ENCODE measurements at regions of chr1 and their contacts with region 1.

Region 1: GRCh38 chr1:181479137-181479745 is 4.1 kb upstream of the CACNA1E start:
- DNase-seq: peak; percentile 69
- ATAC-seq: peak; percentile 90

Region 2: DNA sequence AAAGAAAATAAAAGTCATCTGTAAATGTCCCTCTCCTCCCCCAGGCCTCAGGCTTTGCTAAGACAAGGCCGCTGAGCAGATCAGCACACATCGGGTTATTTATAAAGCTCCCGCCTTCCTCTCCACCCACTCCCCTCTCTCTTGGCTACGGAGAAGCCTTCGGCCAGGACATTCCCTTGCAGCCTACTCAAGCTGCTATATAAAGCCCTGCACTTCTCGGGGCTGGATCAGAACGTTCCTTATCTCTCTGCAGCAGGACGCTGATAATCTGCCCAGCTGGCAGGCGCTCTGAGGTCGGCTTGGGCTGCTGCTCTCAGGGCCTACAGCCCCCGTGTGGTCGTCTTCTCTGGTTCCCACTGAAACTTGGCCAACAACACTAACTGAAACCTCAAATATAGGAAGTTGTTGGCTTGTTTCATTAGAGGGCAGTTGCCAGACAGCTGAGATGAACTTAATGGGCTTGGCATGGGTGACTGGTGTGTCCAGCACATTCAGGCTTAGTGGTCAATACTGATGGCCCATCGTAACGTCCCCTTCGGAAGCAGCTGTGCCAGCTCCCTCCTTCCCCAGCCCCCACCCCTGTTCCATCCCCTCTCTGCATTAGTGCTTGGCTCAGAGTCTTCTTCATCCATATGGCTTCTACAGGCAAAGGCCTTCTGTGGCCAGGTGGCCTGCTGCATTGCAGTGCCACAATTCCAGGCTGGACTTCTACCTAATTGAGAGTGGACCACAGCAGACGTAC is 326.2 kb before region 1 on chr1:
- intact Hi-C with region 1: no loop called
- DNase-seq: peak; percentile 92
- ATAC-seq: peak; percentile 91

Region 3: DNA sequence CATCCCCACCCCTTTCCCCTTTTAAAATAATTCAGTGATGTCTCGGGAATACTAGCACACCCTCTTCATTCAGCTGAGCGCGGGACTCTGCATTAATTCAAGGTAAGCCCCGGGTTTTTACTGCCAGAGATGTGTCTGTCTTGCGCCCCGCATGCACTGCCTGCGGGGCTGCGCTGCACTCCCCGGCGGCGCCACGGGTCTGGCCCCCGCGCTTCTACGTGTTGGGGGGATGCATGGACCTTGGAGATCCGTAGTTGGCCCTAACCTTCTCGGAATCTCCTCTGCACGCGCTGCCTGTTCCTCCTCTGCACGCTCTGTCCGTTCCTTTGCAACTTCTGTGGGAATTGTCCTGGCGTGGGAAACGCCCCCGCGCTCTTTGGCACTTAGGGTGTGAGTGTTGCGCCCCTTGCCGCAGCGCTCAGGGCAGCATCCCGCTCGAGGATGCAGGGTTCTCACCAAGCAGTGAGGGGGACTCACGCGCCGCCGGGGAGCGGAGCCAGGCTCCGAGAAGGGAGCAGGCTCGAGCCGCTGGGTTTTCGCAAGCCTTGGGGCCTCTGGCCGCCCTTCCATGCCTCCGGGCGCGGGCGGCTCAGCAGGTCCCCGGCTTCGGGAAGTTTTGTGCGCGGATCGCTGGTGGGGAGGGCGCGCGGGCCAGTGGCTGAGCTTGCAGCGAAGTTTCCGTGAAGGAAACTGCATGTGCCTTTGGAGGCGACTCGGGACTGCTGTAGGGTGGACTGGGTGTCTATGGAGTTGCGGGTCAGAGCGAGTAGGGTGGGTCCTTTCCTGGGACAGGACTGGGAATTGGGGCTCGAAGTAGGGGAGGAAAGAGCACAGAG is 161.0 kb before region 1 on chr1:
- intact Hi-C with region 1: no loop called
- DNase-seq: no peak
- ATAC-seq: peak; percentile 43

Region 4: DNA sequence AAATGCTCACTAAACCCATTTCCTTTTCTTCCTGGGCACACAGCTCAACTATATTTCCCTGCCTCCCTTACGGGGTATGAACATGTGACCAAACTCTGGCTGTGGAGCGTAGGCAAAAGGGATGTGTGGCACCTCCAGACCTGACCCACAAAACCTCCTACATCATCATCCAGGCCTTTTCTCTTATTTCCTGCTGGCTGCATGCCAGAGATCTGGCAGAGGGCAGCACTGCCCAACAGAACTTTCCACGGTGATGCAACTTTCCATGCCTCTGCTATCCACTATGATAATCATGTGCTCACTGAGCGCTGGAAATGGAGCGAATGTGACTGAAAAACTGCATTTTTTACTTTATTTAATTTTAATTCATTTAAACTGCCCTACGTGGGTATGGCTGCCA is 95.5 kb before region 1 on chr1:
- intact Hi-C with region 1: no loop called
- DNase-seq: no peak
- ATAC-seq: no peak

Region 5: GRCh38 chr1:181676269-181676668 is 197.0 kb after region 1 on chr1:
- intact Hi-C with region 1: loop called (anchors 2 kb)
- DNase-seq: no peak
- ATAC-seq: no peak

Region 6: GRCh38 chr1:181936768-181937581 is 457.7 kb after region 1 on chr1:
- intact Hi-C with region 1: loop called (anchors 10 kb)
- DNase-seq: no peak
- ATAC-seq: peak; percentile 52